SK-N-SH (cell line): ENCODE measurements at regions of chr3 and their contacts with region 1.

Region 1: DNA sequence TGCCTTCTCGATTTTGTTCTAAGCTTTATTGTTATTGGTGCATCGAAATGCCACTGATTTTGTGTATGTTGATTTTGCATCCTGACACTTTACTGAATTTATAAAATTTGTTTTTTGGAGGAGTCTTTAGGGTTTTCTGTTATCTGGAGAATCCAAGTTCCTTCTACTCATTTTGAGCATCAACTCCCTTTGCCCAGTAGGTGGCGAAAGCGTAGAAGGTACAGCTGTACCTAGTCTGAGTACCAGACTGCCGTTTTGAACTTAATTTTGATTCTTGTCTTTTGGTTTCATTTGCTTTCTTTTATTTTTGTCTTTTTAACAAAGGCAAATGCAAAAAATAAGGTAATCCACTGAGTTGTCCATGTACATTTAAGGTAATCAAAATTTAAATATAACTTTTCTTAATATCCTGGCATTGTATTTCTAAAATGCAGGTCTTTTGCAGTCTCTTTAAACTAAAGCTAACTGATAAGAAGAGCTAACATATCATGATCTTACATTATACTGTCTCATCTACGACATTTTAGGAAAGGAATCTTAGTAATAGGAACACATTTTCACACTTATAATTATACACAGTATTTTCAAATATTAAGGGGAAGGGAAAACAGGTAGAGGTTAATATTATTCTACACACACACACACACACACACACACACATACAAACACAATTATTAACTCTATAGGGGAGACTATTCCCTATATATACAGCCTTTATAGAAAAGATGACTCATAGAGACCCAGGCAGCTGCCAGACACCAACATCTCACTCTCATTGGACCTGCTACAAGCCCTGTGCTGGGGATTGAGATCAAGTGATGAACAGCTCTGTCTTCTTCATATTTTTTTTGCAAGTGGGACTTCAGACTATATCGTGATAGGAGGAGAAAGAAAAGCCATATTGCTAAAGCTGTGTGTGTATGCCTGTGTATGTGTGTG is 71.7 kb downstream of the SYNPR start:
- DNase-seq: peak; percentile 45
- H3K4me3 ChIP-seq: peak overlapping the region in 1 of 2 experiments; percentile 21; a peak in 1 of 4 replicates
- H3K27ac ChIP-seq: no peak overlapping the region
- H3K4me1 ChIP-seq: peaks cover 3 to 14% of the 10 kb centered on the region in 2 experiments; a peak in 2 of 4 replicates
- H3K27me3 ChIP-seq: no peaks in the 10 kb centered on the region
- CTCF ChIP-seq: peak; percentile 91
- EP300 ChIP-seq: no peak
- RAD21 ChIP-seq: peak; percentile 80

Region 2: GRCh38 chr3:63661248-63661647 is 311.4 kb after region 1 on chr3:
- CTCF ChIA-PET with region 1: interaction called, 29 read pairs
- POLR2A ChIA-PET with region 1: no interaction called
- DNase-seq: no peak
- H3K4me3 ChIP-seq: no peak overlapping the region
- H3K27ac ChIP-seq: no peak overlapping the region
- H3K4me1 ChIP-seq: no peaks in the 10 kb centered on the region
- H3K27me3 ChIP-seq: no peaks in the 10 kb centered on the region; the same call in 1 of the 2 replicates
- CTCF ChIP-seq: peak; percentile 47
- EP300 ChIP-seq: no peak
- RAD21 ChIP-seq: peak; percentile 56

Region 3: DNA sequence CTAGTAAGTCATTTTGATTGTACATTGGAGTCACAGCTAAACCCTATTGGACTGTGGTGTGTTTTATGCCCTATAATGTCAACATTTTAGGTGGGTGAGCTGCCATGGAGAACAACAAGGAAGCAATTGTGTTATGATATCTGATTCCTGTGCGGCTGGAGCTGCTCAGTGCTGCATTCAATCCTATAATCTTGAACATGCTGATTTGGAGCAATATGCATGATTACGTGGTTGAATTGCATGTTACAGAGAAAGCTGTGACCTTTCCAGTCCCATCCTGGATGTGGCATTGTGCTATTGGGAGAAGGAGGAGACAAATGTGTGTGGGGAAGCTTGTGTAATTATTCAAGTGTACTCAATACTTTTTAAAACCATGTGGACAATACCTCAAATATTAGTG is 449.1 kb after region 1 on chr3:
- CTCF ChIA-PET with region 1: interaction called, 32 read pairs
- POLR2A ChIA-PET with region 1: no interaction called
- DNase-seq: no peak
- H3K4me3 ChIP-seq: no peak overlapping the region
- H3K27ac ChIP-seq: no peak overlapping the region
- H3K4me1 ChIP-seq: peaks cover 0 to 17% of the 10 kb centered on the region in 2 experiments; a peak in 2 of 4 replicates
- H3K27me3 ChIP-seq: no peaks in the 10 kb centered on the region
- CTCF ChIP-seq: no peak
- EP300 ChIP-seq: no peak
- RAD21 ChIP-seq: no peak

Region 4: DNA sequence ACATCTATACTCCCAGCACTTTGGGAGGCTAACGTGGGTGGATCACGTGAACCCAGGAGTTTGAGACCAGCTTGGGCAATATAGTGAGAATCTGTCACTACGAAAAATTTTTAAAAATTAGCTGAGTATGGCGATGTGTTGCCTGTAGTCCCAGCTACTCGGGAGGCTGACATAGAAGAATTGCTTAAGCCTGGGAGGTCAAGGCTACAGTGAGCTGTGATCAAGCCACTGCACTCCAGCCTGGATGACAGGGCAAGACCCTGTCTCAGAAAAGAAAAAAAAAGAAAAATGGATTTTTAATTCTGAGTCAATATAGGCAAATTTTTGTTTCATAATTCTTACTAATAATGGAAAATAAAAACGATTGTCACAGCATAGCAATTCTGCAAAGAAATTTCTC is 482.5 kb after region 1 on chr3:
- CTCF ChIA-PET with region 1: interaction called, 31 read pairs
- POLR2A ChIA-PET with region 1: no interaction called
- DNase-seq: no peak
- H3K4me3 ChIP-seq: no peak overlapping the region
- H3K27ac ChIP-seq: no peak overlapping the region
- H3K4me1 ChIP-seq: no peaks in the 10 kb centered on the region
- H3K27me3 ChIP-seq: no peaks in the 10 kb centered on the region
- CTCF ChIP-seq: no peak
- EP300 ChIP-seq: no peak
- RAD21 ChIP-seq: no peak

Region 5: GRCh38 chr3:64484289-64484992 is 1134.6 kb after region 1 on chr3:
- CTCF ChIA-PET with region 1: interaction called, 10 read pairs
- POLR2A ChIA-PET with region 1: no interaction called
- DNase-seq: peak; percentile 76
- H3K4me3 ChIP-seq: no peak overlapping the region; a peak in 1 of 4 replicates
- H3K27ac ChIP-seq: no peak overlapping the region
- H3K4me1 ChIP-seq: peaks cover 0 to 3% of the 10 kb centered on the region in 2 experiments; a peak in 1 of 4 replicates
- H3K27me3 ChIP-seq: no peaks in the 10 kb centered on the region
- CTCF ChIP-seq: peak; percentile 91
- EP300 ChIP-seq: no peak
- RAD21 ChIP-seq: peak; percentile 100